Dendritic cell treated with granulocyte-macrophage colony-stimulating factor and Interleukin-4, amounts not matched to agents 40 ng/mL and 50 ng/mL, for 4 days (primary cell): ENCODE measurements at regions of chr12 and their contacts with region 1.

Region 1: GRCh38 chr12:72747111-72747849 is 475.1 kb downstream of the TRHDE start:
- H3K4me3 Mint-ChIP-seq: no peak overlapping the region
- H3K27ac Mint-ChIP-seq: peak overlapping the region; percentile 89
- H3K4me1 Mint-ChIP-seq: peaks cover 38% of the 10 kb centered on the region
- H3K27me3 Mint-ChIP-seq: no peaks in the 10 kb centered on the region

Region 2: GRCh38 chr12:72673853-72674252 is 73.4 kb before region 1 on chr12:
- intact Hi-C with region 1: loop called (anchors 10 kb)
- H3K4me3 Mint-ChIP-seq: no peak overlapping the region
- H3K27ac Mint-ChIP-seq: peak overlapping the region; percentile 17
- H3K4me1 Mint-ChIP-seq: peaks cover 41% of the 10 kb centered on the region
- H3K27me3 Mint-ChIP-seq: no peaks in the 10 kb centered on the region